ENCODE measurements at regions of chr11 and their contacts with region 1.

Region 1: DNA sequence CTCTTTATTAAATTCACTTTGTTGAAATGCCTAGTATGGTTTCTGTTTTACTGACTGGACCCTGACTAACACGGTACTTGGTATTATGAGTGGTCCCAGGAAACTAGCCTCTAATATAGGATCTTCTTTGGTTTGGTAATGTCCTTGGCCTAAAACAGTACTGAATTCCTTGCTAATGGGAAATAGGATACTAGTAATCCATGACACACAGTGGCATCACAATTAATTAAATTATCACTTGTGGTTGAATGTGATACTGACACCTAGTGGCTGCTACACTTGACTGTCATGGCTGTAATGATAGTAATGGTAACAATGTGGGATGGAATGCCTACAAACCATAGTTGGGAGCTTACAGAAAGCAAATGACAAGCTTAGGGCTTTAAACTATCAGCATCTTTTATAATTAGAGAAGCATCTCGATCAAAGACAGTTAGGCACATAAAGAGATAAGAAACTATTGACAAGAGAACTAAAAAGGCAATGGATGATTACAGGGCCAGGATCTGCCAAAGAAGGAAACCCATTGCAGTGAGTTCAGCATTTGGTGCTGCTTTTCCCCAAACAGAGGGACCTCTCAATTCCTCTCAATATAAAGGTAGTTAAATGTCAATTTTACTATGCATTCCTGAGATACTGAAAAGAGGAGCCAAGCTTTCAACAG is 8.6 kb downstream of the DNHD1 start:
- DNase-seq: peak in 2 of 4 donors; percentile 10 to 39
- ATAC-seq: peak; percentile 84
- H3K4me3 ChIP-seq: no peak overlapping the region
- H3K27ac ChIP-seq: no peak overlapping the region
- H3K4me1 ChIP-seq: no peaks in the 10 kb centered on the region
- H3K27me3 ChIP-seq: no peaks in the 10 kb centered on the region
- CTCF ChIP-seq: peak; percentile 63 to 64

Region 2: DNA sequence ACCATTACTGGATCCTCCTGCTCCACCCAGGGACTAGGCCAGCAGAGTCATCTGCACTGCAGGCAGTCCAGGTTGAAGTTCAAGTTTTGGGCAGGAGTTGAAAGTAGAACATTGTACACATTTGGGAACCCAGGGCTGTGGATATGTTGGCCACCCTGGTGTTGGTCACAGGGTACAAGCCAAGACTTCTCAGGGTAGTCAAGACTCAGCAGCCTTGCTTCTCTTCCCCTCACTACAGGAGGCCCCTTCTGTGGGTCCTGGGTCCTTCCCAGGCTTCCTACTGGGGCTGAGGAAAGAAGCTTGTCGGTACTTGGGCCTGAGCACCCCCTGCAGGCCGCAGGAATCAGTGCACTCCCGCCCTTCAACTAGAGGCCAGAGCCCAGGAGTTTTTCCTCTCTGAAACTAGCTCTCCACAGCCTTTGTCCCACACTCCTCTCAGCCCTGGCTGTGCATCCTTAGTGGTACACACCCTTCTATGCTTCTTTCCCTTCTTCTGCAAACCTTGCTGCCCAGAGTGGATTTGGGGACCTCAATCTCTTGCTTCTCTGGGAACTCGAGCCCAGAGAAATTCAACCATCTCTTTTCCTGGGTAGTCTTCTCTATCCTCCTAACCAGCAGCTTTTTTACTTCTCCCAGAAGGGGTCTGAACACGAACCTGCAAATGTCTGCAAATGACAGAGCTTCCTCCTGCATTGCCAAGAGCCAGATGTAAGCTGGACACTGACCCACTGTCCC is 62.3 kb before region 1 on chr11:
- intact Hi-C with region 1: loop called in 1 of 2 experiments (anchors 10 kb)
- DNase-seq: peak; percentile 22 to 81 (median 54)
- ATAC-seq: peak; percentile 90
- H3K4me3 ChIP-seq: no peak overlapping the region
- H3K27ac ChIP-seq: no peak overlapping the region
- H3K4me1 ChIP-seq: no peaks in the 10 kb centered on the region
- H3K27me3 ChIP-seq: no peaks in the 10 kb centered on the region
- CTCF ChIP-seq: peak; percentile 82 to 88

Measured in left lung (tissue), 14 donors.